B cell (primary cell): ENCODE measurements at regions of chr12 and their contacts with region 1.

Region 1: GRCh38 chr12:121980191-121980891 is 41.3 kb upstream of the BCL7A start:
- DNase-seq: peak; percentile 85
- ATAC-seq: peak; percentile 74
- H3K4me3 ChIP-seq: peak overlapping the region in 4 of 5 experiments; percentile 2 to 39 (median 12)
- H3K4me3 Mint-ChIP-seq: peak overlapping the region; percentile 81
- H3K27ac ChIP-seq: peak overlapping the region; percentile 63 to 81
- H3K27ac Mint-ChIP-seq: peak overlapping the region; percentile 95
- H3K4me1 ChIP-seq: peaks cover 53 to 64% of the 10 kb centered on the region in 2 donors
- H3K4me1 Mint-ChIP-seq: peaks cover 55% of the 10 kb centered on the region
- H3K27me3 ChIP-seq: no peaks in the 10 kb centered on the region
- H3K27me3 Mint-ChIP-seq: no peaks in the 10 kb centered on the region
- CTCF ChIP-seq: no peak

Region 2: GRCh38 chr12:121947981-121948380 is 32.4 kb before region 1 on chr12:
- CTCF ChIA-PET with region 1: no interaction called
- POLR2A ChIA-PET with region 1: no interaction called
- intact Hi-C with region 1: no loop called
- DNase-seq: no peak
- ATAC-seq: no peak
- H3K4me3 ChIP-seq: no peak overlapping the region
- H3K4me3 Mint-ChIP-seq: no peak overlapping the region
- H3K27ac ChIP-seq: no peak overlapping the region
- H3K27ac Mint-ChIP-seq: no peak overlapping the region
- H3K4me1 ChIP-seq: no peaks in the 10 kb centered on the region
- H3K4me1 Mint-ChIP-seq: no peaks in the 10 kb centered on the region
- H3K27me3 ChIP-seq: no peaks in the 10 kb centered on the region
- H3K27me3 Mint-ChIP-seq: no peaks in the 10 kb centered on the region
- CTCF ChIP-seq: no peak

Region 3: DNA sequence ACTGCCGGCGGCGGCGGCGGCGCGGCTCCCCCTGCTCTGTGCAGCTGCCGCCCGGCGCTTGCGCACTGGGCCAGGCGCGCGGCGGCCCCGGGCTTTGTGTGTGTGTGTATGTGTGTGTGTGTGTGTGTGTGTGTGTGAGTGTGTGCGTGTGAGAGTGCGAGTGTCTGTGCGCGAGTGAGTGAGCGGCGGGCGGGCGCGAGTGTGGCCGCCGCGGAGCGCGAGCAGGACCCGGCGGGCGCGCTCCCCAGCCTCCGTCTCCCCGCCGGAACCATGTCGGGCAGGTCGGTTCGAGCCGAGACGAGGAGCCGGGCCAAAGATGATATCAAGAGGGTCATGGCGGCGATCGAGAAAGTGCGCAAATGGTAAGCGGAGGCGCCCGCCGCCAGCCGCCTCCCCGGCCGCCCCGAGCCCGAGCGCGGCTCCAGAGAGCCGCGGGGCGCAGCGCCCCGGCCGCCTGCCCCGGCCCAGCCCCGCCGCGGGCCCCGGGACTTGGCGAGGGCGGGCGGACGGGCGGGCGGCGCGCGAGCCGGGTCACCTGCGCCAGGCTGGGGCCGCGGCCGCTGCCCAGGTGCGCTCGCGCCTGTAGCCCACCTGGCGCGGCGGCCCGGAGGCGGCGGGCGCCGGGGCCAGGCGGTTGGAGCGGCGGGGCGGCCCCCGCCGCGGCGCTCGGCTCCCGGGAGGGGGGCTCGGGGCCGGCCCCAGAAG is 41.6 kb after region 1 on chr12 and contains the start of gene BCL7A:
- CTCF ChIA-PET with region 1: interaction called, 6 read pairs
- POLR2A ChIA-PET with region 1: interaction called, 10 read pairs
- intact Hi-C with region 1: loop called (anchors 1 kb)
- DNase-seq: peak; percentile 90
- ATAC-seq: peak; percentile 73
- H3K4me3 ChIP-seq: peak within 1 kb of the TSS; percentile 26 to 86 (median 78)
- H3K4me3 Mint-ChIP-seq: peak within 1 kb of the TSS; percentile 94
- H3K27ac ChIP-seq: peak within 1 kb of the TSS; percentile 67 to 80
- H3K27ac Mint-ChIP-seq: peak within 1 kb of the TSS; percentile 98
- H3K4me1 ChIP-seq: peaks cover 32 to 51% of the 10 kb centered on the region in 2 donors
- H3K4me1 Mint-ChIP-seq: peaks cover 38% of the 10 kb centered on the region
- H3K27me3 ChIP-seq: no peaks in the 10 kb centered on the region
- H3K27me3 Mint-ChIP-seq: no peaks in the 10 kb centered on the region
- CTCF ChIP-seq: no peak
- total RNA-seq, gene BCL7A: 75.6 and 75.9 TPM in 2 replicates